ENCODE measurements at regions of chr16 and their contacts with region 1.

Region 1: GRCh38 chr16:85610508-85611332 is 2.4 kb upstream of the GSE1 start:
- DNase-seq: peak; percentile 90
- H3K4me3 Mint-ChIP-seq: peak overlapping the region; percentile 63
- H3K27ac Mint-ChIP-seq: peak overlapping the region; percentile 19
- H3K4me1 Mint-ChIP-seq: peaks cover 16% of the 10 kb centered on the region
- H3K27me3 Mint-ChIP-seq: no peaks in the 10 kb centered on the region
- CTCF ChIP-seq: peak; percentile 96

Region 2: DNA sequence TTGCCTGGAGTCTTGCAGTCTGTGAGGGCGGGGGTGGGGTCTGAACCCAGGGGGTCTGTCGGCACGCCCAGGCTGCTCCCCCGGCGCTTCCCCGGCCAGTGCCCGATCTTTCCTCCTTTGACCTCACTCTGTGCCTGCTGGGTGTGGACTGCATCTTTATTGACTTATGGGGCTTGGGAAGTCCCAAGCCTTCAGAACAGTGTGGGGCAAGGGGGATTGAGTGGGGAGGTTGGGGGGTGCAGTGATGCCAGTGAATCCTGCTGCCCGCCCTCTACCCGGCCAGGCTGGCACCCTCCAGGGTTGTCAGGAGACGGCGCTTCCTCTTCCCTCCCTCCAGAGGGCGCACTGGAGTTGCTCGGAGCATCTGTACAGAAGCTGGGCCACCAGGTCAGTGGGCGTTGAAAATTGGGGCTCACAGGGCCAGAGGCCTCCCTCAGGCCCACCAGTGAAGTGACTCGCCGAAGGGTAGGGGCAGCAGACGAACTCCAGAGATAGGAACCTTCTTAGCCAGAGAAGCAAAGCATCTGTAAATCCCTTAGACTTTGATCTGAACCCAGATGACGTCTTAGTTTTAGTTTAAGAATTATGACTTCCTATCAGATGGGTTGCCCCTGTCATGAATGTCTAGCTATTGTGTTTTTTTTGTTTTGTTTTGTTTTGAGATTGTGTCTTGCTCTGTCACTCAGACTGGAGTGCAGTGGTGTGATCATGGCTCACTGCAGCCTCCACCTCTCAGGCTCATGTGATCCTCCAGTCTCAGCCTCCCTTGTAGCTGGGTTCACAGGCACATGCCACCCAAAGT is 313.7 kb before region 1 on chr16:
- CTCF ChIA-PET with region 1: interaction called, 6 read pairs
- POLR2A ChIA-PET with region 1: no interaction called
- intact Hi-C with region 1: loop called (anchors 5 kb)
- DNase-seq: peak; percentile 66
- H3K4me3 Mint-ChIP-seq: no peak overlapping the region
- H3K27ac Mint-ChIP-seq: no peak overlapping the region
- H3K4me1 Mint-ChIP-seq: no peaks in the 10 kb centered on the region
- H3K27me3 Mint-ChIP-seq: no peaks in the 10 kb centered on the region
- CTCF ChIP-seq: peak; percentile 87

Region 3: GRCh38 chr16:85369741-85370528 is 240.8 kb before region 1 on chr16:
- CTCF ChIA-PET with region 1: interaction called, 15 read pairs
- POLR2A ChIA-PET with region 1: interaction called, 5 read pairs
- intact Hi-C with region 1: loop called (anchors 1 kb)
- DNase-seq: peak; percentile 76
- H3K4me3 Mint-ChIP-seq: peak overlapping the region; percentile 60
- H3K27ac Mint-ChIP-seq: no peak overlapping the region
- H3K4me1 Mint-ChIP-seq: peaks cover 61% of the 10 kb centered on the region
- H3K27me3 Mint-ChIP-seq: no peaks in the 10 kb centered on the region
- CTCF ChIP-seq: peak; percentile 83

Region 4: GRCh38 chr16:85420501-85421337 is 190.0 kb before region 1 on chr16:
- CTCF ChIA-PET with region 1: interaction called, 17 read pairs
- POLR2A ChIA-PET with region 1: no interaction called
- intact Hi-C with region 1: loop called (anchors 1 kb)
- DNase-seq: peak; percentile 38
- H3K4me3 Mint-ChIP-seq: no peak overlapping the region
- H3K27ac Mint-ChIP-seq: no peak overlapping the region
- H3K4me1 Mint-ChIP-seq: no peaks in the 10 kb centered on the region
- H3K27me3 Mint-ChIP-seq: no peaks in the 10 kb centered on the region
- CTCF ChIP-seq: peak; percentile 99

Region 5: GRCh38 chr16:85554112-85554813 is 56.5 kb before region 1 on chr16:
- CTCF ChIA-PET with region 1: interaction called, 22 read pairs
- POLR2A ChIA-PET with region 1: interaction called, 68 read pairs
- intact Hi-C with region 1: loop called (anchors 1 kb)
- DNase-seq: peak; percentile 91
- H3K4me3 Mint-ChIP-seq: peak overlapping the region; percentile 91
- H3K27ac Mint-ChIP-seq: peak overlapping the region; percentile 73
- H3K4me1 Mint-ChIP-seq: peaks cover 12% of the 10 kb centered on the region
- H3K27me3 Mint-ChIP-seq: no peaks in the 10 kb centered on the region
- CTCF ChIP-seq: no peak

Measured in MCF 10A (cell line).